IMR-90 (cell line): ENCODE measurements at regions of chr5 and their contacts with region 1.

Region 1: DNA sequence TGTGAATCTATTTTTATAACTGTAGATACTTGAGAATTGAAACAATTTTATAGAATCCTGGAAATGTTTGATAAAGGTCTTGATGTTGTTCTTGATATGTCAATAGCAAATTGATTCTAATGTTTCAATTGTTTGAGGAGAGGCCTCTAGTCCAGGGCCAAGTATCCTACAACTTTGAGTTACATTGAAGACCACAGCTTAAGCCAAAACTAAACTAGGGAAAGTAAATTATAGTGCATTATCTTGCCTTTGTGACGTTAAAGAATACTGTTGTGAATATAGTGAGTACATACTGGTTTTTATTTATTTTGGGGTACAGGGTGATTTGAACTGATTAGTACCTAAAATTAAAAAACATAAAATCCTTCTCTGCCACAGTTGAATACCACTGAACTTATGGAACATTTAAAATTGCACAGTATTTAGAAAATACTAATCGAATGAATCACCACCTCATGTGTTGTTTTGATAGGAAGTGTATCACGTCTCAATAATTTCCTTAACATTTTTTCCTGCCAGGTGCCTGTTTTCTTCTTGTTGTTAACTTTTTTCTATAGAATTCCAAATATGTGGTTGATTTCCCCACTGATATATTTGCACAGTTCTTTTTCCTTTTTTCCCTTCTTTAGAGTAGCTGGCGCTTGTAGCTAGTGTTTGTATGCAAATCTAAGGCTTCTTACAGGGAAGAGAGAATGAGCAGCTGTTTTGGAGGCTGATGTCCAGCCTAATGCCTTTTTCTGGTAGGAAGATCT is 12.5 kb downstream of the ARHGEF28 start:
- DNase-seq: peak; percentile 78
- ATAC-seq: peak; percentile 76
- H3K4me3 ChIP-seq: no peak overlapping the region
- H3K27ac ChIP-seq: peak overlapping the region; percentile 76
- H3K4me1 ChIP-seq: peaks cover 11% of the 10 kb centered on the region
- H3K27me3 ChIP-seq: no peaks in the 10 kb centered on the region
- CTCF ChIP-seq: no peak
- POLR2A ChIP-seq: no peak
- RAD21 ChIP-seq: no peak

Region 2: DNA sequence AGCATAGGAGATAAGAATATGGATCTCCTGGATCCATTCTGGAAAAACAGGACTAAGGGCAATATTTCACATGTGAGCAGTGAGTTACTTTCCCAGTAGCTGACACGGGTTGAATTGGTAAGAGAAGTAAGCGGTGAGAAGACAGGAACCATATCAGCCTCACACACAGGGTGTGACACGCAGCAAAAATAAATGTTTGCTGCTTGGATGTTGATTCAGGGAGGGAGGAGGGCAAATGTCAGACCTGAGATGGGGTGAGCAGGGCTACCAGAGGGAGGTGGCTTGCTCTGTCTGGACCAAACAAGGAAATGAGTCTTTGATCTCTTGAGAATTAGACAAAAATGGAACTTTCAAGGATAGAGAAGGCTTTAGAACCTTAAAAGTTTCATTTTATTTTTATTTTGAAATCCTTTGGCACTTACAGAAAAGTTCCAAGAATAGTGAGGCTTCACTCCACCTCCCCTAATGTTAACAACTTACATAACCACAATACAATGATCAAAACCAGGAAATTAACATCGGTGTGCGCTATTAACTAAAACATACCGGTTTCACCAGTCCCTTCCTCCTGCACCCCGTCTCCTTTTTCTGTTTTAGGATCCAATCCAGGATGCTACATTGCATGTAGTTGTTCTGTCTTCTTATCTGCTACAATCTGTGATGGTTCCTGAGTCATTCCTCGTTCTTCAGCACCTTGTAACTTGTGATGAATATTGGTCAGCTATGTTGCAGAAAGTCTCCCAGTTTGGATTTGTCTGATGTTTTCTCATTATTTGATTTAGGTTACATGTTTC is 33.1 kb before region 1 on chr5:
- CTCF ChIA-PET with region 1: no interaction called
- POLR2A ChIA-PET with region 1: no interaction called
- dilution Hi-C with region 1: no loop called
- in situ Hi-C with region 1: no loop called
- intact Hi-C with region 1: no loop called
- DNase-seq: peak; percentile 42
- ATAC-seq: no peak
- H3K4me3 ChIP-seq: no peak overlapping the region
- H3K27ac ChIP-seq: no peak overlapping the region; the same call in 1 of the 2 replicates
- H3K4me1 ChIP-seq: peaks cover 9% of the 10 kb centered on the region
- H3K27me3 ChIP-seq: no peaks in the 10 kb centered on the region
- CTCF ChIP-seq: no peak
- POLR2A ChIP-seq: no peak
- RAD21 ChIP-seq: no peak

Region 3: GRCh38 chr5:73678322-73678740 is 39.8 kb after region 1 on chr5:
- CTCF ChIA-PET with region 1: no interaction called
- POLR2A ChIA-PET with region 1: interaction called, 17 read pairs
- dilution Hi-C with region 1: no loop called
- in situ Hi-C with region 1: no loop called
- intact Hi-C with region 1: no loop called
- DNase-seq: no peak
- ATAC-seq: no peak
- H3K4me3 ChIP-seq: no peak overlapping the region
- H3K27ac ChIP-seq: no peak overlapping the region
- H3K4me1 ChIP-seq: peaks cover 14% of the 10 kb centered on the region
- H3K27me3 ChIP-seq: no peaks in the 10 kb centered on the region
- CTCF ChIP-seq: no peak
- POLR2A ChIP-seq: no peak
- RAD21 ChIP-seq: no peak

Region 4: DNA sequence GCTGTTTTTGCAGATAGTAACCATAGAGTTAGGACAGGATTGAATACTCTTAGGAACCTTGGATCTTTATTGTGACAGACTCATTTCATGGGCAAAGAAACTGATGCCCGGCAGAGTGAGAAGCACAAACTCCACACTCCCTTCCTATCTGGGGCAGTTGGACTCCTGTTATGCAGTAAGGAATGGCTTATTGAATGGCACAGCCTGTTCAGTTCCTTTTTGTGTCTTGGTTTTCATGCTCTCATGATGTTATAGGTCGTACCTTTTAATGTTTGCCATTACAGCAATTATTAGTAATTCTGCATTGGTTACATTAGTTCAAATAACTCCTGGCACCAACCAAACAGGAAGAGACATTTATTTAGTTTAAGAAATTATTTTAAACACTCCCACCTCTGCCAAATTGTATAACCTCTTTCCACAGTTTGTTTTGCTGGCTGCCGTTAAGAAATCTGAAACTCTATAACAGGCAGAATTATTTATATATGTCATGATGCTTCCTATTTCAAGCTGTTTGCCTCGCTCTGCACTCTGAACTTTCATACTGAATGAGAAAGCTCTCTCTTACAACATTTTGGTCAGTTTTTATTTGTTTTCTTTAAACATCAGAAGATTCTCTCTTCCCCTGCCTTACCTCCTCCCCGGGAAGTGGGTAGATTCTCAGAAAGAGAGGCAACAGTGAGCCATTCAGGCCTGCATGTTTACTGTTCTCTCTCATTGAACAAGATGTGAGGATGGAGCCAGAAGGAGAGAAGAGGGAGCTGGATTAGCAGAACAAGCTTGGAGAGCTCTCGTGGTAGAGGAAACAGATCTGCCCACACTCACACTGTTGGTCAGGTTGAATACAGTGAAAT is 131.9 kb after region 1 on chr5:
- CTCF ChIA-PET with region 1: no interaction called
- POLR2A ChIA-PET with region 1: interaction called, 10 read pairs
- dilution Hi-C with region 1: no loop called
- in situ Hi-C with region 1: no loop called
- intact Hi-C with region 1: no loop called
- DNase-seq: peak; percentile 71
- ATAC-seq: peak; percentile 91
- H3K4me3 ChIP-seq: no peak overlapping the region
- H3K27ac ChIP-seq: peak overlapping the region; percentile 71
- H3K4me1 ChIP-seq: peaks cover 7% of the 10 kb centered on the region
- H3K27me3 ChIP-seq: no peaks in the 10 kb centered on the region
- CTCF ChIP-seq: no peak
- POLR2A ChIP-seq: no peak
- RAD21 ChIP-seq: no peak